ENCODE measurements at regions of chr10 and their contacts with region 1.

Region 1: GRCh38 chr10:78972947-78973900 is 95.5 kb upstream of the ZMIZ1 start:
- DNase-seq: peak; percentile 83 to 88
- ATAC-seq: peak; percentile 64 to 82 (median 75)
- H3K4me3 ChIP-seq: peak overlapping the region; percentile 15 to 60 (median 55)
- H3K27ac ChIP-seq: peak overlapping the region; percentile 94 to 99 (median 96)
- H3K4me1 ChIP-seq: peaks cover 12 to 45% (median 31%) of the 10 kb centered on the region in 9 donors
- H3K27me3 ChIP-seq: no peaks in the 10 kb centered on the region
- CTCF ChIP-seq: no peak

Region 2: GRCh38 chr10:79149662-79150443 is 176.6 kb after region 1 on chr10:
- intact Hi-C with region 1: loop called in 1 of 10 experiments (anchors 10 kb)
- DNase-seq: peak; percentile 86 to 90
- ATAC-seq: peak; percentile 54 to 74 (median 66)
- H3K4me3 ChIP-seq: peak overlapping the region in 2 of 10 donors; percentile 1 to 2
- H3K27ac ChIP-seq: peak overlapping the region; percentile 88 to 98 (median 93)
- H3K4me1 ChIP-seq: peaks cover 90 to 100% (median 100%) of the 10 kb centered on the region in 9 donors
- H3K27me3 ChIP-seq: no peaks in the 10 kb centered on the region
- CTCF ChIP-seq: no peak

Measured in heart right ventricle (tissue), 16 donors.